ENCODE measurements at regions of chrX and their contacts with region 1.

Region 1: GRCh38 chrX:136652822-136653723 is 5.1 kb downstream of the CD40LG start:
- DNase-seq: peak in 2 of 9 donors; percentile 39 to 55
- ATAC-seq: peak; percentile 42
- H3K4me3 ChIP-seq: peak overlapping the region; percentile 94
- H3K4me3 Mint-ChIP-seq: peak overlapping the region; percentile 79 to 99 (median 96)
- H3K27ac ChIP-seq: peak overlapping the region; percentile 79
- H3K27ac Mint-ChIP-seq: peak overlapping the region; percentile 85 to 99 (median 95)
- H3K4me1 ChIP-seq: peaks cover 14 to 30% of the 10 kb centered on the region in 2 donors
- H3K4me1 Mint-ChIP-seq: peaks cover 12 to 57% (median 42%) of the 10 kb centered on the region in 7 donors
- H3K27me3 ChIP-seq: peaks cover 0 to 3% of the 10 kb centered on the region in 2 donors
- H3K27me3 Mint-ChIP-seq: no peaks in the 10 kb centered on the region

Region 2: GRCh38 chrX:136616987-136617685 is 35.9 kb before region 1 on chrX:
- CTCF ChIA-PET with region 1: interaction called, 5 read pairs
- POLR2A ChIA-PET with region 1: interaction called, 14 read pairs
- intact Hi-C with region 1: no loop called
- DNase-seq: peak in 6 of 9 donors; percentile 22 to 60 (median 34)
- ATAC-seq: peak; percentile 85
- H3K4me3 ChIP-seq: peak overlapping the region; percentile 45
- H3K4me3 Mint-ChIP-seq: peak overlapping the region; percentile 30 to 73 (median 64)
- H3K27ac ChIP-seq: peak overlapping the region; percentile 60
- H3K27ac Mint-ChIP-seq: peak overlapping the region; percentile 63 to 93 (median 87)
- H3K4me1 ChIP-seq: peaks cover 18 to 50% of the 10 kb centered on the region in 2 donors
- H3K4me1 Mint-ChIP-seq: peaks cover 5 to 75% (median 64%) of the 10 kb centered on the region in 7 donors
- H3K27me3 ChIP-seq: no peaks in the 10 kb centered on the region
- H3K27me3 Mint-ChIP-seq: no peaks in the 10 kb centered on the region

Region 3: DNA sequence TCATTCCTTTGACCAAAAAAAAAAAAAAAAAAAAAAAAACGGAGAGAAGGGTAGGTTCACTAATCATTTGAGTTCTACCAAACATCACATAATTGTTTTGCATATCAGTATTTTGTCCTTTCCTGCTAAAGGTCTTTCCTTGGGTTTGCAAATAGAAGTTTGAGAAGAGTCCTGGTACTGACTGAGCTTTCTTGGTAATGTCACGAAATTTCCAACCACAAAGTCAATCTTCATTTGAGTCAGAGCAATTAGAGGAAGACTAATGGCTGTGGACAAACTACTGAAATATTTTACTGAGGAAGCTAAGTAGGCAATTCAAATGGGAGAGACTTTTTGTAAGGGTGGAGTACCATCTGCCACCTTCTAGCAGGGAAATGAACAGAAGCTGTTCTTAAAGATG is 26.8 kb before region 1 on chrX:
- CTCF ChIA-PET with region 1: interaction called, 3 read pairs
- POLR2A ChIA-PET with region 1: interaction called, 86 read pairs
- intact Hi-C with region 1: no loop called
- DNase-seq: no peak
- ATAC-seq: no peak
- H3K4me3 ChIP-seq: peak overlapping the region; percentile 18
- H3K4me3 Mint-ChIP-seq: peak overlapping the region in 8 of 10 donors; percentile 17 to 75 (median 58)
- H3K27ac ChIP-seq: peak overlapping the region; percentile 12
- H3K27ac Mint-ChIP-seq: peak overlapping the region; percentile 40 to 93 (median 85)
- H3K4me1 ChIP-seq: peaks cover 56 to 72% of the 10 kb centered on the region in 2 donors
- H3K4me1 Mint-ChIP-seq: peaks cover 30 to 97% (median 87%) of the 10 kb centered on the region in 7 donors
- H3K27me3 ChIP-seq: no peaks in the 10 kb centered on the region
- H3K27me3 Mint-ChIP-seq: no peaks in the 10 kb centered on the region

Region 4: DNA sequence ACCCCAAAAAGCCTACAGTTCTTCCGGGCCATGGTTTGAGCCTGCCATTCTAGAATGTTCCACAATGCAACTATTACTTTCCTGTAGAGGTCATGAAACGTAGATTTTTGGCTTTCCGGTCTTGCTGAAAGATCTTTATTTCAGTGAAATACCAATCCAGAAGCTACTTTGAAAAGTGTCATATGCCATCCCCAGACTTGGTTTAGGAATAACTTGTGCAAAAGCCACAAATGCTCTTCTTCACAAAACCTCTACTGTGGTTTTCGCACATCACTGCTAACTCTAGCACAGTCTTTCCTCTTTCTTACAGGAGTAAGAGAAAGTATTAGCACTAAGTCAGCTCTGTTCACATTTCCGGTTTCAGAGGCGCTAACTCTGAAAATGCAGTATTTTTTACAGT is 17.8 kb before region 1 on chrX:
- CTCF ChIA-PET with region 1: interaction called, 5 read pairs
- POLR2A ChIA-PET with region 1: interaction called, 86 read pairs
- intact Hi-C with region 1: loop called (anchors 1 kb)
- DNase-seq: peak in 5 of 9 donors; percentile 49 to 68 (median 60)
- ATAC-seq: peak; percentile 80
- H3K4me3 ChIP-seq: peak overlapping the region; percentile 36
- H3K4me3 Mint-ChIP-seq: peak overlapping the region; percentile 68 to 84 (median 78)
- H3K27ac ChIP-seq: peak overlapping the region; percentile 53
- H3K27ac Mint-ChIP-seq: peak overlapping the region; percentile 80 to 94 (median 89)
- H3K4me1 ChIP-seq: peaks cover 62 to 88% of the 10 kb centered on the region in 2 donors
- H3K4me1 Mint-ChIP-seq: peaks cover 30 to 96% (median 83%) of the 10 kb centered on the region in 7 donors
- H3K27me3 ChIP-seq: no peaks in the 10 kb centered on the region
- H3K27me3 Mint-ChIP-seq: no peaks in the 10 kb centered on the region

Region 5: GRCh38 chrX:136665258-136665900 is 12.3 kb after region 1 on chrX:
- CTCF ChIA-PET with region 1: no interaction called
- POLR2A ChIA-PET with region 1: interaction called, 55 read pairs
- intact Hi-C with region 1: loop called in 1 of 2 experiments (anchors 1 kb)
- DNase-seq: no peak
- ATAC-seq: no peak
- H3K4me3 ChIP-seq: no peak overlapping the region
- H3K4me3 Mint-ChIP-seq: peak overlapping the region in 7 of 10 donors; percentile 11 to 81 (median 41)
- H3K27ac ChIP-seq: no peak overlapping the region
- H3K27ac Mint-ChIP-seq: peak overlapping the region; percentile 27 to 88 (median 69)
- H3K4me1 ChIP-seq: peaks cover 16 to 59% of the 10 kb centered on the region in 2 donors
- H3K4me1 Mint-ChIP-seq: peaks cover 34 to 84% (median 78%) of the 10 kb centered on the region in 7 donors
- H3K27me3 ChIP-seq: no peaks in the 10 kb centered on the region
- H3K27me3 Mint-ChIP-seq: no peaks in the 10 kb centered on the region

Region 6: DNA sequence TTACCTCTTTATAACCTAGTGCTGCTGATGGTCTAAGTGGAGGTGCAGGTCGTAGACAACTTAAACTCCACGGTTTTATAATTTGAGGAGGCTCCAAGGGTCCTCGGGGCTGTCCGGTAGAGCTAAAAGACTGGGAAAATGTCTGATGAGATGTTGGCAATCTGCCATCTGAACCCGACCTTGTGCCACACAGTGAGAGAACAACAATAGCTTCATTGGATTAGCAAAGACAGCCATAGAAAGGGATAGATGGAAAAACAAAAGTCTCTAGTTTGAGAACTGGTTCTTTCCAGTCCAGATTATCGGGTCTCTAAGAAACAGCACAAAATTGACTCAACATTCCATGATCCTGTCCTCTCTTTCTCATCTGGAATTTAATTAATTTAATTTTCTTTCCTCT is 26.5 kb after region 1 on chrX:
- CTCF ChIA-PET with region 1: no interaction called
- POLR2A ChIA-PET with region 1: interaction called, 27 read pairs
- intact Hi-C with region 1: loop called in 1 of 2 experiments (anchors 2 kb)
- DNase-seq: no peak
- ATAC-seq: no peak
- H3K4me3 ChIP-seq: no peak overlapping the region
- H3K4me3 Mint-ChIP-seq: peak overlapping the region in 1 of 10 donors; percentile 8
- H3K27ac ChIP-seq: peak overlapping the region; percentile 29
- H3K27ac Mint-ChIP-seq: peak overlapping the region in 7 of 9 donors; percentile 14 to 97 (median 70)
- H3K4me1 ChIP-seq: peaks cover 39 to 60% of the 10 kb centered on the region in 2 donors
- H3K4me1 Mint-ChIP-seq: peaks cover 14 to 66% (median 48%) of the 10 kb centered on the region in 7 donors
- H3K27me3 ChIP-seq: no peaks in the 10 kb centered on the region
- H3K27me3 Mint-ChIP-seq: no peaks in the 10 kb centered on the region

Region 7: GRCh38 chrX:136689436-136689835 is 36.4 kb after region 1 on chrX:
- CTCF ChIA-PET with region 1: interaction called, 13 read pairs
- POLR2A ChIA-PET with region 1: interaction called, 34 read pairs
- intact Hi-C with region 1: loop called (anchors 1 kb)
- DNase-seq: peak in 2 of 9 donors; percentile 17 to 31
- ATAC-seq: peak; percentile 23
- H3K4me3 ChIP-seq: no peak overlapping the region
- H3K4me3 Mint-ChIP-seq: peak overlapping the region; percentile 55 to 80 (median 64)
- H3K27ac ChIP-seq: peak overlapping the region; percentile 81
- H3K27ac Mint-ChIP-seq: peak overlapping the region; percentile 76 to 97 (median 91)
- H3K4me1 ChIP-seq: peaks cover 71 to 81% of the 10 kb centered on the region in 2 donors
- H3K4me1 Mint-ChIP-seq: peaks cover 17 to 76% (median 62%) of the 10 kb centered on the region in 7 donors
- H3K27me3 ChIP-seq: no peaks in the 10 kb centered on the region
- H3K27me3 Mint-ChIP-seq: no peaks in the 10 kb centered on the region

Measured in naive thymus-derived CD4-positive, alpha-beta T cell (primary cell).